ENCODE measurements at regions of chr20 and their contacts with region 1.

Region 1: GRCh38 chr20:44516491-44516890 is 5.4 kb downstream of the SERINC3 start:
- DNase-seq: no peak
- H3K4me3 ChIP-seq: no peak overlapping the region
- H3K27ac ChIP-seq: no peak overlapping the region
- H3K4me1 ChIP-seq: peaks cover 14% of the 10 kb centered on the region
- H3K27me3 ChIP-seq: no peaks in the 10 kb centered on the region
- CTCF ChIP-seq: no peak

Region 2: GRCh38 chr20:44355498-44356352 is 160.8 kb before region 1 on chr20 and contains the start of gene HNF4A:
- intact Hi-C with region 1: no loop called
- DNase-seq: peak; percentile 83
- H3K4me3 ChIP-seq: peak within 1 kb of the TSS; percentile 57
- H3K27ac ChIP-seq: peak within 1 kb of the TSS; percentile 95
- H3K4me1 ChIP-seq: no peaks in the 10 kb centered on the region
- H3K27me3 ChIP-seq: no peaks in the 10 kb centered on the region
- CTCF ChIP-seq: no peak
- total RNA-seq, gene HNF4A: 288 to 346 TPM

Region 3: GRCh38 chr20:44475694-44476560 is 40.6 kb before region 1 on chr20 and contains the start of gene TTPAL:
- intact Hi-C with region 1: loop called (anchors 5 kb)
- DNase-seq: peak; percentile 93
- H3K4me3 ChIP-seq: peak within 1 kb of the TSS; percentile 68
- H3K27ac ChIP-seq: peak within 1 kb of the TSS; percentile 72
- H3K4me1 ChIP-seq: no peaks in the 10 kb centered on the region
- H3K27me3 ChIP-seq: no peaks in the 10 kb centered on the region
- CTCF ChIP-seq: no peak
- total RNA-seq, gene TTPAL: 8.4 to 11.6 TPM